HAP-1 (cell line): ENCODE measurements at regions of chr14 and their contacts with region 1.

Region 1: GRCh38 chr14:60656686-60657455 is 7.6 kb upstream of the SIX1 start:
- DNase-seq: peak in 1 of 2 experiments; percentile 50
- H3K4me3 ChIP-seq: peak overlapping the region; percentile 17
- H3K4me1 ChIP-seq: peaks cover 19% of the 10 kb centered on the region
- H3K27me3 ChIP-seq: no peaks in the 10 kb centered on the region

Region 2: DNA sequence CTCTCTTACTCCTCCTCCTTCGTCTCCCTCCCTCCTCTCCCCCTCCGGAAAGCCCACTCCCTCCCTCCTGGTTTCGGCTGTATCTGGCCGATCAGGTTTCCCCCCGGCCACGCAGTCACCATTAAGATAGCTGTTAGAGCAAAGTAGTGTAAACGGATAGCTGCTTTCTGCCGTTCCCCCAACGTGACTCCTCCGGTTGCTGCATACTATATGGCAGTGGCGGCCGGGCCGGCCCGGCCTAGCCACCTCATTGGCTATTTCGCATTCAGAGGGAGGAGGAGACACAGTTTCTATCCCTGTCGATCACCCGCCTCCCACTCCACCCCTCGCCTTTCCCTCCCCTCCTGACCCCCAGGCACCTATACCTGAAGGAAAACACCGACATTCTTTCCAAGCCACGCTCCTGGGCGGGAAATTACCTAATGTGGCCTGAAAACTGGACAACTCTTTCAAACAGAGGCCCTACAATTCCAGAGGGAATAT is 67.3 kb after region 1 on chr14 and contains the start of gene SIX4:
- in situ Hi-C with region 1: loop called (anchors 10 kb)
- DNase-seq: peak; percentile 88 to 89
- H3K4me3 ChIP-seq: peak within 1 kb of the TSS; percentile 76
- H3K4me1 ChIP-seq: peaks cover 10% of the 10 kb centered on the region
- H3K27me3 ChIP-seq: no peaks in the 10 kb centered on the region